Heart right ventricle (tissue), 16 donors: ENCODE measurements at regions of chr13 and their contacts with region 1.

Region 1: DNA sequence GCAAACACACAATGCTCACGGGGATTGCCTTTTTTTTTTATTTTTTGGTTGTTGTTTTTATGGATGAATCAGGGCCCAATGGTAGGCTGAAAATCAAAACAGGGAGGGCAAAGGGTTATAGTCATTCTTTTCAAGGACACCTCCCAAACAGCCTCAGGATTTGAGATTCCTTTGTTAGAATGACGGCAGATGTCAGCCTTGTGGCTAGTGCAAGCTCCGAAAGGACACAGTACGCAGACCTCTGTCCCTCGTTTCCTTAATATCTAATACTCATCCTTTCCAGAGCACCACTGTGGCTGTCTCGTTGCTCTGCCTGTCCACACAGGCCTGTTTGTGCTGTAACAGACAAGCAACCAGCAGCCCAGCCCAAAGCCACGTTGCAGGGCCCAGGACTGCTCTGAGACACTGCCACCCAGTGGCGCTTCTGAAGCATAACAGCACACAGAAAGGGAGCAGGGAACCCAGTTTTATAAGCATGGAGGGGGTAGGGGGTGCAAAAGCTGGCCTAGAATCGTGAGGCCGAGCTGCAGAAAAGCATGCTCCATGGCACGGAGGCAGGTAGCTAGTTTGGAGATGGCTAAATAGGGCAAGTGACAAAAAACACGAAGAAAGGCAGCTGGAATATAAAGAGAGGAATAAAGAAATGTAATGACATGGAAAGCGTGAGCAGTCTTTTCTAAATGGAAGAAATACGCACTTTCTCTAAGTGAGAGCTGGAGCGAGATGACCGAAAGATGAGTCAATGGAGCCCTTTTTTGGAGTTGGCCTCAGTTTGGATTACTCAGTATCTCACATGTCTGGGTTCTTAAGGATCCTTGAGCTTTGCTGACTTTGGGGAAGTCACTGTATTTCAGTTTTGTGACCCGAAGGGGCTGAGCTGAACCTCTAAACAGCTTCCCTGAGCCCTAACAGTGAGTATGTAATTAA is 40.7 kb upstream of the MEDAG start:
- DNase-seq: peak; percentile 67 to 70
- ATAC-seq: peak; percentile 78 to 86 (median 82)
- H3K4me3 ChIP-seq: no peak overlapping the region
- H3K27ac ChIP-seq: peak overlapping the region in 8 of 10 donors; percentile 42 to 80 (median 60)
- H3K4me1 ChIP-seq: peaks cover 5 to 33% (median 18%) of the 10 kb centered on the region in 9 donors
- H3K27me3 ChIP-seq: peaks cover 0 to 7% (median 0%) of the 10 kb centered on the region in 7 donors
- CTCF ChIP-seq: peak; percentile 79 to 93 (median 90)

Region 2: DNA sequence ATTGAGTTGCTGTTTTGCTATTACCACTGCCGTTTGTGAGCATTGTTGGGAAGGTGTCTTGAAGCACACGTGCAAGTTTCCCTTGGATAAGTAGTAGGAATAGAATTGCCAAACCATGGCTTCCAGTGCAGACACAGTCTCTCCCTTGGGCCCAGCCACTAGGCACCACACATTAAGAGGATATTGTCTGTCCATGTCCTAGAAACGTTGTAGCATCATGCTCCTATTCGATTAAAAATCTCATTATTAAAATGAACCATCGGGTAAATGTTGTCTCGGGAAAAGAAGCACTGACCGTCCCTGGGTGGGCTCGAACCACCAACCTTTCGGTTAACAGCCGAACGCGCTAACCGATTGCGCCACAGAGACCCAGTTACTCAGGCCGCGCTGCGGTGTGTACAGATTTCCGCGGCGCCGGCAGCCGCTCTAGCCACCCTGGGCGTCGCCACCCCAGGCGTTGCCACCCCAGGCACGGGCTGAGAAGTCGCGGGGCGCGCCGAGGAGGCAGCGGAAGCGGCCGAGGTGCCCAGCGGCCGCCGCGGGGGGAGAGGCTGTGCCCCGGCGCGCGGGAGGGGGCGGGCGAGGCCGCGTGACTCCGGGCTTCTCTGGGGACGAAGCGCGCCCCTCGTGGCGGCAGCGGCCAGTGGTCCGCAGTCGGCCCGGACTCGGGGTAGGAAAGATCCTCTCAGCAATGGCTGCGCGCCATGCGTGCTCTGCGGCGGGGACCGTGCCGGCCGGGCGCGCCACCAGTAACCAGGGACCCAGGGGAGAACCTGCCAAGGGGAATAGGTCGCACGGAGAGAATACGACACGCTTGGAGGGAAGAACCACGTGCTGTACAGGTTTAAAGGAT is 191.5 kb before region 1 on chr13:
- intact Hi-C with region 1: loop called in 4 of 10 experiments (anchors 5 to 10 kb)
- DNase-seq: peak; percentile 86 to 90
- ATAC-seq: peak; percentile 93 to 97 (median 96)
- H3K4me3 ChIP-seq: peak overlapping the region in 9 of 10 donors; percentile 33 to 67 (median 59)
- H3K27ac ChIP-seq: peak overlapping the region; percentile 49 to 84 (median 76)
- H3K4me1 ChIP-seq: peaks cover 0 to 11% (median 7%) of the 10 kb centered on the region in 9 donors
- H3K27me3 ChIP-seq: no peaks in the 10 kb centered on the region
- CTCF ChIP-seq: peak; percentile 63 to 93 (median 81)

Region 3: GRCh38 chr13:30679483-30680330 is 185.7 kb before region 1 on chr13:
- intact Hi-C with region 1: loop called in 4 of 10 experiments (anchors 5 to 10 kb)
- DNase-seq: no peak
- ATAC-seq: peak in 7 of 8 donors; percentile 45 to 81 (median 74)
- H3K4me3 ChIP-seq: no peak overlapping the region
- H3K27ac ChIP-seq: no peak overlapping the region
- H3K4me1 ChIP-seq: peaks cover 0 to 19% (median 0%) of the 10 kb centered on the region in 9 donors
- H3K27me3 ChIP-seq: no peaks in the 10 kb centered on the region
- CTCF ChIP-seq: peak in 8 of 9 donors; percentile 12 to 70 (median 58)

Region 4: GRCh38 chr13:30821421-30821820 is 44.0 kb before region 1 on chr13:
- intact Hi-C with region 1: no loop called
- DNase-seq: no peak
- ATAC-seq: no peak
- H3K4me3 ChIP-seq: no peak overlapping the region
- H3K27ac ChIP-seq: no peak overlapping the region
- H3K4me1 ChIP-seq: peaks cover 0 to 11% (median 0%) of the 10 kb centered on the region in 9 donors
- H3K27me3 ChIP-seq: peaks cover 0 to 13% (median 0%) of the 10 kb centered on the region in 7 donors
- CTCF ChIP-seq: no peak

Region 5: DNA sequence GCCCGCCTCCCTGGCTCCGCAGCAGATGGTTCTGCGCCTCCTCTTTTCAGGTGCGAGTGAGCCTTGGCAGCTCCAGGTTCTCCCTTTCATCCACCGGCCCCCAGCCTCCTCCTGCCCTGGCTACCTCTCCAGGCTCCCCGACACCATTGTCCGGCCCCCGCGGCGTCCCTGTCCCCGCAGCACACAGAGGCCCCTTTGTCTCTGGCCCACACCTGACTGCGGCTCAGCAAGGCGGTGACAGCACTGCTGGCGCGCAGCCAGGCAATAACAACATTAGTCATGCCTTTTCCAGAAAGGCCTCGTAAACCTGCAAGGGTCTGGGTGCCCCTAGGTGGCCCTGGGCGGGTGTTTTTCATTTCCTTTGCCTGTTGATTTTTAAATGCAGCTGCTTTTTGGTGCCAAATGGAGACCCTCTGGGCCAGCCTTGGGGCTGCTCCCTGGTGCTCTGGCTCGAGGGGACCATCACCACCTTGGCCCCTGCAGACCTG is 32.5 kb before region 1 on chr13:
- intact Hi-C with region 1: no loop called
- DNase-seq: peak in 1 of 2 donors; percentile 44
- ATAC-seq: peak in 5 of 8 donors; percentile 24 to 48 (median 36)
- H3K4me3 ChIP-seq: no peak overlapping the region
- H3K27ac ChIP-seq: no peak overlapping the region
- H3K4me1 ChIP-seq: peaks cover 0 to 5% (median 0%) of the 10 kb centered on the region in 9 donors
- H3K27me3 ChIP-seq: peaks cover 0 to 22% (median 4%) of the 10 kb centered on the region in 7 donors
- CTCF ChIP-seq: no peak

Region 6: DNA sequence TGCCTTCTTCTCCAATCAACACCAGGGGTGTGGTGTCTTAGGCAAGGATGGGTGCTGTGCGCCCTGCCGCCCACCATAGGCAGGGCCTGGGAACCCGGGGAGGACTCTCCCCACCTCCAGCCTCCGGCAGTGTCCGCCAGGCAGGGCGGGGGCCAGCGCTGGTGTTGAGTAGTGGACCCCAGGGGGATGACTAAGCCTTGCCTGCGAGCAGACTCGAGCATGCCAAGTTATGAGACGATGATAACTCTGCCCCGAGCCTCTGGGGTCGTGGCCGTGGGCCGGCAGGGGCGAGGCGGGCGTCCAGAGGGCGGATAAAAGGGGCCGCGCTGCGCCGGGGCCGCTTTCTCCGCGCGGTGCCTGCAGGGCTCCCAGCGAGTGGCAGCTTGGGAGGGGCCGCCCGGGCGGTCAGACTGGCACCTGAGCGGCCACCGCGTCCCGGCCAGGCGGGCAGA is 40.6 kb after region 1 on chr13 and contains the start of gene MEDAG:
- intact Hi-C with region 1: loop called in 1 of 10 experiments (anchors 5 kb)
- DNase-seq: peak; percentile 79 to 81
- ATAC-seq: peak; percentile 77 to 91 (median 88)
- H3K4me3 ChIP-seq: peak within 1 kb of the TSS; percentile 5 to 58 (median 54)
- H3K27ac ChIP-seq: peak within 1 kb of the TSS; percentile 13 to 86 (median 76)
- H3K4me1 ChIP-seq: peaks cover 12 to 46% (median 26%) of the 10 kb centered on the region in 9 donors
- H3K27me3 ChIP-seq: peaks cover 0 to 56% (median 17%) of the 10 kb centered on the region in 7 donors
- CTCF ChIP-seq: no peak
- total RNA-seq, gene MEDAG: 3.2 to 22.1 (median 5.5) TPM

Region 7: DNA sequence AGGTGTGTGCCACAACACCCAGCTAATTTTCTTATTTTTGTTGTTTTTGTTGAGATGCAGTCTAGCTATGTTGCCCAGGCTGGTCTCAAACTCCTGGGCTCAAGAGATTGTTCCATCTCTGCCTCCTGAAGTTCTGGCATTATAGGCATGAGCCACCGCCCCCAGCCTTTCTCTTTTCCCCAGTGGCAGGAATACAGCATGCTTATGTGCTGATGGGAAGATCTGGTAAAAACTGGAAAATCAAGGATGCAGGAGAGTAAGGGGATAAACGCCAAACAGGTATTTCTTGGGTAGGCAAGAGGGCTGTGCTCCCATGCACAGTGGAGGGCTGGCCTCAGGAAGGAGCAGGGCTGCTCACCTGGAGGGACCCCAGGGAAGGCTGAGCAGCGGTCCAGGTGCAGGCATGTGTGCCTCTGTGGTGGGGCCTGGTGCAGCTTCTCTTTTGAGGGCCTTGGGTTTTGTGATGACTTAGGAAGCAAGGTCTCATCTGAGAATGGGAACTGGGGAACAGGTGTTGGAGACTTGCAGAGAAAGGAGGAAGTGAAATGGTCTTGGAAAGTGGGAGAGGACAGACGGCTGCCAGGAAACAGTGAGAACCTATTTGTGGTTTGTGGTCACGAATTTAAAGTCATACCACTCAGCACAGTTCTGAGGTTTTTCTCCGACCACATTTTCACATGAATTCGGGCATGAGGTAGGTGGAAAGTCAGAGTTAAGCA is 173.6 kb after region 1 on chr13:
- intact Hi-C with region 1: loop called in 5 of 10 experiments (anchors 5 to 10 kb)
- DNase-seq: no peak
- ATAC-seq: no peak
- H3K4me3 ChIP-seq: no peak overlapping the region
- H3K27ac ChIP-seq: no peak overlapping the region
- H3K4me1 ChIP-seq: peaks cover 0 to 14% (median 2%) of the 10 kb centered on the region in 9 donors
- H3K27me3 ChIP-seq: peaks cover 0 to 29% (median 3%) of the 10 kb centered on the region in 7 donors
- CTCF ChIP-seq: no peak